Astrocyte of the cerebellum (primary cell): ENCODE measurements at regions of chr3 and their contacts with region 1.

Region 1: DNA sequence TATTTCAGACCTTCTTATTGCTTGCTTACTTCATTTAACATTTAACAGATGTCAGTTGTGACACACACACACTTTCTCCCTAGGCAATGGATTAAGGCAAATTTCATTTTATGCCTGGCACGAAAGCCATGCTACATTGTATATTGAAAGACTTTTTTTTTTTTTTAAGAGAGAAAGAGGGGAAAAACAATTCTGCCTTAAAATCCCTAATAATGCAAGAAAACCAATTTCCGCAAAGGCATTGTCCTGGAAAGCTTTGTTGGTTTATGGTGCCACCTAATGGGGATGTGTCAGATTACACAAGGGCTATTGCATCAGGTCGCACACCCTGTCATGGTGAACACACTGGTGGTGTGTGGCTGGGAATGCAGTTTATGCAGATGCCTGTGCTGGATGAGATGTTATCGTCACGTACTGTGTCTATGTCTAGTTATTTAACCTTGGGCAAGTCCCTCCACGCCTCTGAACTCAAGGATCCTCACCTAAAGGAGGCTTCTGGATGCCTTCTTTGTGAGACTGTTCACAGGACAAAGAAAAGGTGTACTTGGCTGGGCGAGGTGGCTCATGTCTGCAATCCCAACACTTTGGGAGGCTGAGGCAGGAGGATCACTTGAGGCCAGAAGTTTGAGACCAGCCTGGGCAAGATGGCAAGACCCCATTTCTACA is 37.3 kb upstream of the RFTN1 start:
- DNase-seq: peak; percentile 82
- H3K4me3 ChIP-seq: peak overlapping the region; percentile 5
- CTCF ChIP-seq: peak; percentile 91

Region 2: DNA sequence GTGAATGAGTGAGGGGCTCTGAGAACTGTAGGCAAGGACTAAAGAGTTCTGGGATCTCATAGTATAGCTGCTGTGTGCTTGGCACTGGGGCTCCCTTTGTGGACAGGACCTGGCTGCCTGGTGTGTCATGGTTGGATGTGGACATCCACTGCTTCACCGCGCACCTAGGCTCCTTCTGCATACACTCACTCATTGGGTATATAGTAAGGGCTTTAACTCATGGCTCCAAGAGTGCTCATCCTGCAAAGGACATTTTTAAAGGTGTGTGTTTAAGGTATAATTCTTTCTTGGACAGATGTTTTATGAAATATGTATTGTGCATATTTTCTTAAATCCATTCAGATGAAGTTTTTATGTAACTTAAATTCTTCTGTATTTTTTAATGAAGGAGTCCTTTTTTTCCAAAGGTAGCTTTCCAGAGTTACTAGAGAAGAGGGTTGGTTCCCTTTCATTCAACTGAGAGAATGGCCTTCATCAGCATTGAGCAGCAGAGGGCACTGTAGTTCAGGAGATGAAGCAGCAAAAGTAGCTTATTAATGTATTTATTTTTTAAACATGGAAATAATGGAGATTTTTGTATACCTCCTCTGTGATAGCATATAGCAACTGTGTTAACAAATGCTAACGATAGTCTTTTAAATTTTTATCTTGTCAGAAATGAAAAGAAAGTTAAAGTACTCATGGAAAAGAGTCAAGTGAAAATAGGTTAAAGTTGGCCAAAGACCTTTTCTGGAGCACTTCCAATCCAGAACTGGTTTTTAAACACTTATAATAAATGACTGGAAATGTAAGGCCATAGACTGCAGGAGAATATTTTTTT is 260.6 kb before region 1 on chr3:
- in situ Hi-C with region 1: loop called (anchors 5 kb)
- DNase-seq: peak; percentile 40
- H3K4me3 ChIP-seq: no peak overlapping the region
- CTCF ChIP-seq: peak; percentile 74

Region 3: DNA sequence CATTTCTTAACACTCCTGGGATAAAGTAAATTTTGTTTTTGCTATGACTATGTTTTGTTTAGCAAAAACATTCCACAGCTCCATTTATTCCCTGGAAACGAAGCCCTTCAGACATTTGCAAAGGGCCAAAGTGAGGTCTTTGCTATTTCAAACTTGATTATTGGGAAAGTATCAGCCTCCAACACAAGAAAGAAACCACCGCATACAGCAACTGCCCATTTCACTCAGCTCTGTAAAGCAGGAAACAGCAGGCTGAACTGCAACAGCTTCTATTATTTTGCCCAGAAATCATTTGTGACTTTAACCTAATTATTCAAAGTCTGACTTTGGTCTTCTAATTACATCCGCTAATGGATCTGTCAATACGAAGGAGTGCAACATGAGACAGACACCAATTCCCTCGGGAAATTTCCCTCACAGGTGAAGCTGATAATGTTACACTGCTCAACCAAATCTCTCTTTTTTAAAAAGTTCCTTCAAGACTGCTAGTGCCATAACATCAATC is 109.4 kb before region 1 on chr3:
- in situ Hi-C with region 1: no loop called
- DNase-seq: peak; percentile 54
- H3K4me3 ChIP-seq: no peak overlapping the region
- CTCF ChIP-seq: no peak